CD8-positive, alpha-beta T cell (primary cell): ENCODE measurements at regions of chr15 and their contacts with region 1.

Region 1: DNA sequence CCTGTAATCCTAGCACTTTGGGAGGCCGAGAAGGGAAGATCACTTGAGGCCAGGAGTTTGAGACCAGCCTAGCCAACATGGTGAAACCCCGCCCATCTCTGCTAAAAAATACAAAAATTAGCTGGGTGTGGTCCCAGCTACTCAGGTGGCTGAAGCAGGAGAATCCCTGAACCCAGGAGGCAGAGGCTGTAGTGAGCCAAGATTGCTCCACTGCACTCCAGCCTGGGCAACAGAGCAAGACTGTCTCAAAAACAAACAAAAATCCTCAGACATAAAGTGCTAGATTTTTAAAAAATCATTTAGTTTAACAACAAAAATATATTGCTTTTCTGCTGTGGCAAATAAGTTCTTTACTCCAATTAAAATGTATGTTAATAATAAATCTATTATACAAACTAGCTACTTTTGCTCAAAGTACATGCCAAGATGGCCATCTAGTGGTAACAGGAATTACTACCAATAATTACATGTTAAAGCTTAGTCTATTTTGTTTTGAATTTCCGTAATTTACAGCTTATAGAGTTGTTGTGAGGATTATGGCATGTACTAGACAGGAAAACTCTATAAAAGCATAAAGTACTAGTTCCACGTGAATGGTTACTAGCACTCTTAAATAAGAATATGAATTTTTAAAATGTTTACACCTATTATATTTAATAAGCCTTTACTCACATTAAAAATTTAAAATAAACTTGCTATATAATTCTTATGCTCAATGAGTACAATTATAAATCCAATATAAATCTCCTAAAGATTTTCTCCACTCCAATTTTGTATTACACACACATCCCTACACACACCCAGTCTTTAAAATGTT is 39.0 kb downstream of the GABPB1 start:
- DNase-seq: peak in 2 of 9 experiments; percentile 58 to 71
- ATAC-seq: peak; percentile 29
- H3K4me3 ChIP-seq: no peak overlapping the region
- H3K4me3 Mint-ChIP-seq: no peak overlapping the region
- H3K27ac ChIP-seq: no peak overlapping the region
- H3K27ac Mint-ChIP-seq: no peak overlapping the region
- H3K4me1 ChIP-seq: no peaks in the 10 kb centered on the region
- H3K4me1 Mint-ChIP-seq: peaks cover 19% of the 10 kb centered on the region
- H3K27me3 ChIP-seq: no peaks in the 10 kb centered on the region
- H3K27me3 Mint-ChIP-seq: no peaks in the 10 kb centered on the region
- CTCF ChIP-seq: peak; percentile 97

Region 2: DNA sequence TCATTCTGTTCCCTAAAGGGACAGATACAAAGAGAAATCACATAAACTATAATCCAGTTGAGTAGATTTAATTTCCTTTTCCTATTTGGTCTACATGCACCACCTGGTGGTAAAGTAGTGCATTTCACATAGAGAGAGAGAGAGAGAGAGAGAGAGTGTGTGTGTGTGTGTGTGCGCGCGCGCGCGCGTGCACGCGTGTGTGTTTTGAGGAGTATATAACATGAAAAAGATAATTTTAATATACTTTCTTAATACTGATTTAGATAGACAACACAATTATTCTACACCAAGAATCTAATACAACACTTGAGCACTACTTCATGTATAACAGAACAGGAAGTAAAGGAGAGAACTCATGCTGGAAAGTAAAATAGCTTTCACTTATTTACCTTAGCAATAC is 894.0 kb before region 1 on chr15:
- CTCF ChIA-PET with region 1: no interaction called
- POLR2A ChIA-PET with region 1: no interaction called
- intact Hi-C with region 1: loop called in 1 of 2 experiments (anchors 10 kb)
- DNase-seq: peak in 7 of 9 experiments; percentile 8 to 69 (median 29)
- ATAC-seq: peak; percentile 44
- H3K4me3 ChIP-seq: no peak overlapping the region
- H3K4me3 Mint-ChIP-seq: peak overlapping the region; percentile 44
- H3K27ac ChIP-seq: no peak overlapping the region
- H3K27ac Mint-ChIP-seq: peak overlapping the region; percentile 62
- H3K4me1 ChIP-seq: no peaks in the 10 kb centered on the region
- H3K4me1 Mint-ChIP-seq: peaks cover 3% of the 10 kb centered on the region
- H3K27me3 ChIP-seq: no peaks in the 10 kb centered on the region
- H3K27me3 Mint-ChIP-seq: no peaks in the 10 kb centered on the region
- CTCF ChIP-seq: peak; percentile 80

Region 3: GRCh38 chr15:50435772-50436171 is 119.8 kb after region 1 on chr15:
- CTCF ChIA-PET with region 1: no interaction called
- POLR2A ChIA-PET with region 1: no interaction called
- intact Hi-C with region 1: no loop called
- DNase-seq: no peak
- ATAC-seq: no peak
- H3K4me3 ChIP-seq: no peak overlapping the region
- H3K4me3 Mint-ChIP-seq: no peak overlapping the region
- H3K27ac ChIP-seq: no peak overlapping the region
- H3K27ac Mint-ChIP-seq: peak overlapping the region; percentile 25
- H3K4me1 ChIP-seq: peaks cover 13% of the 10 kb centered on the region
- H3K4me1 Mint-ChIP-seq: peaks cover 51% of the 10 kb centered on the region
- H3K27me3 ChIP-seq: no peaks in the 10 kb centered on the region
- H3K27me3 Mint-ChIP-seq: no peaks in the 10 kb centered on the region
- CTCF ChIP-seq: no peak

Region 4: DNA sequence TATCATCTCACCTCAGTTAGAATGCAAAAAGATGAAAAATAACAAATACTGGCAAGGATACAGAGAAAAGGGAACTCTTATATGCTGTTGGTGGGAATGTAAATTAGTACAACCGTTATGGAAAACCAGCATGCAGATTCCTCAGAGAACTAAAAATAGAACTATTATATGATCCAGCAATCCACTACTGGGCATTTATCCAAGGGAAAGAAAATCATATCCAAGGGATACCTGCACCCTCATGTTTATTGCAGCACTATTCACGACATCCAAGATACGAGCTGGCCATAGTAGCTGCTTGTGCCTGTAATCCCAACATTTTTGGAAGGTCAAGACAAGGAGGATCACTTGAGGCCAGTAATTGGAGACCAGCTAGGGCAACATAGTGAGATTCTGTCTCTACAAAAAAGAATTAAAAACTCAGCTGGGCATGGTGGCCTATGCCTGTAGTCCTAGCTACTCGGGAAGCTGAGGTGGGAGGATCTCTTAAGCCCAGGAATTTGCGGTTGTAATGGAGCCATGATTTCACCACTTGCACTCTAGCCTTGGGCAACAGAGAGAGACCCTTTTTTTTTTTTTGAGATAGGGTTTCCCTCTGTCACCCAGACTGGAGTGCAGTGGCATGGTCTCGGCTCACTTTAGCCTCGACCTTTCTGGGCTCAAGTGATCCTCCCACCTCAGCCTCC is 203.9 kb after region 1 on chr15:
- CTCF ChIA-PET with region 1: no interaction called
- POLR2A ChIA-PET with region 1: no interaction called
- intact Hi-C with region 1: no loop called
- DNase-seq: no peak
- ATAC-seq: no peak
- H3K4me3 ChIP-seq: no peak overlapping the region
- H3K4me3 Mint-ChIP-seq: no peak overlapping the region
- H3K27ac ChIP-seq: no peak overlapping the region
- H3K27ac Mint-ChIP-seq: no peak overlapping the region
- H3K4me1 ChIP-seq: no peaks in the 10 kb centered on the region
- H3K4me1 Mint-ChIP-seq: no peaks in the 10 kb centered on the region
- H3K27me3 ChIP-seq: no peaks in the 10 kb centered on the region
- H3K27me3 Mint-ChIP-seq: no peaks in the 10 kb centered on the region
- CTCF ChIP-seq: no peak

Region 5: GRCh38 chr15:50613600-50613999 is 297.6 kb after region 1 on chr15:
- CTCF ChIA-PET with region 1: no interaction called
- POLR2A ChIA-PET with region 1: no interaction called
- intact Hi-C with region 1: no loop called
- DNase-seq: no peak
- ATAC-seq: no peak
- H3K4me3 ChIP-seq: no peak overlapping the region
- H3K4me3 Mint-ChIP-seq: no peak overlapping the region
- H3K27ac ChIP-seq: no peak overlapping the region
- H3K27ac Mint-ChIP-seq: no peak overlapping the region
- H3K4me1 ChIP-seq: no peaks in the 10 kb centered on the region
- H3K4me1 Mint-ChIP-seq: no peaks in the 10 kb centered on the region
- H3K27me3 ChIP-seq: no peaks in the 10 kb centered on the region
- H3K27me3 Mint-ChIP-seq: no peaks in the 10 kb centered on the region
- CTCF ChIP-seq: no peak